K562 (cell line): ENCODE measurements at regions of chr11 and their contacts with region 1.

Region 1: GRCh38 chr11:15884777-15885540 is 471.4 kb downstream of the SOX6 start:
- DNase-seq: peak; percentile 72 to 84 (median 76)
- ATAC-seq: peak; percentile 85
- H3K4me3 ChIP-seq: no peak overlapping the region
- H3K27ac ChIP-seq: no peak overlapping the region
- H3K4me1 ChIP-seq: peaks cover 3 to 26% of the 10 kb centered on the region in 2 experiments; a peak in 3 of 5 replicates
- H3K27me3 ChIP-seq: no peaks in the 10 kb centered on the region
- CTCF ChIP-seq: no peak
- EP300 ChIP-seq: no peak
- POLR2A ChIP-seq: no peak
- RAD21 ChIP-seq: no peak

Region 2: GRCh38 chr11:15819679-15820286 is 65.2 kb before region 1 on chr11:
- CTCF ChIA-PET with region 1: no interaction called
- POLR2A ChIA-PET with region 1: no interaction called
- in situ Hi-C with region 1: no loop called
- intact Hi-C with region 1: no loop called
- DNase-seq: peak; percentile 58 to 66 (median 61)
- ATAC-seq: peak; percentile 95
- H3K4me3 ChIP-seq: no peak overlapping the region
- H3K27ac ChIP-seq: no peak overlapping the region
- H3K4me1 ChIP-seq: no peaks in the 10 kb centered on the region
- H3K27me3 ChIP-seq: peaks cover 0 to under 1% of the 10 kb centered on the region in 2 experiments; a peak in 2 of 5 replicates
- CTCF ChIP-seq: peak; percentile 77 to 91 (median 85)
- EP300 ChIP-seq: no peak
- POLR2A ChIP-seq: no peak
- RAD21 ChIP-seq: peak; percentile 37 to 68

Region 3: DNA sequence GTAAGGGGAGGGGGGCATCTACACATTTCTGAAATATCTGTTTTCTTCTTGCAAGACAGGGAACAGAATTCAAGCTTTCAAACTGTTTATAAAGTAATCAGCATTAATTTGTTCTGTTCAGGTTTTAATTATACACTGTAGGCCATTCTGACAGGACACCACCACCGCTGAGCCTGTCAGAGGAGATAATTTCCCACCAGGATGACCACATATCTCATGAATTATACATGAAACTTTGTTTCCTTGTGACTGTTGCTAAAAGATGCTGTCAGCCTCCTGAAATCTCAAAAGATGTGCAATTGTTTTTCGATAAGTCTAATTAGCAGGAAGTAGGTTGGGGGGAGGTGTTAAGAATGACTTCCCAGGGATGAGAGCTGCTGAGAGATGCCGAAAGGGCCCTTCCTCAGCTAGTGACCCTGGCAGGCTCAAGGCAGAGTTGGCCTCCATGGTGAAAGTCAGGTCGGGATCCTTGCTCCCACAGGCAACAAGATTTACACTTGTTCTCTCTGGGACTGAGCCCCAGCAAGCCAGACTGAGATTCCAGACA is 14.1 kb before region 1 on chr11:
- CTCF ChIA-PET with region 1: no interaction called
- POLR2A ChIA-PET with region 1: interaction called, 10 read pairs
- in situ Hi-C with region 1: no loop called
- intact Hi-C with region 1: no loop called
- DNase-seq: no peak
- ATAC-seq: no peak
- H3K4me3 ChIP-seq: no peak overlapping the region
- H3K27ac ChIP-seq: no peak overlapping the region
- H3K4me1 ChIP-seq: no peaks in the 10 kb centered on the region
- H3K27me3 ChIP-seq: peaks cover 0 to 4% of the 10 kb centered on the region in 2 experiments; a peak in 2 of 5 replicates
- CTCF ChIP-seq: no peak
- EP300 ChIP-seq: no peak
- POLR2A ChIP-seq: no peak
- RAD21 ChIP-seq: no peak

Region 4: GRCh38 chr11:15976433-15977045 is 91.6 kb after region 1 on chr11:
- CTCF ChIA-PET with region 1: no interaction called
- POLR2A ChIA-PET with region 1: no interaction called
- in situ Hi-C with region 1: no loop called
- intact Hi-C with region 1: no loop called
- DNase-seq: no peak
- ATAC-seq: peak; percentile 75
- H3K4me3 ChIP-seq: no peak overlapping the region
- H3K27ac ChIP-seq: no peak overlapping the region
- H3K4me1 ChIP-seq: peaks cover 4 to 10% of the 10 kb centered on the region in 2 experiments; a peak in 2 of 5 replicates
- H3K27me3 ChIP-seq: no peaks in the 10 kb centered on the region
- CTCF ChIP-seq: no peak
- EP300 ChIP-seq: no peak
- POLR2A ChIP-seq: no peak
- RAD21 ChIP-seq: no peak